ENCODE measurements at regions of chr5 and their contacts with region 1.

Region 1: DNA sequence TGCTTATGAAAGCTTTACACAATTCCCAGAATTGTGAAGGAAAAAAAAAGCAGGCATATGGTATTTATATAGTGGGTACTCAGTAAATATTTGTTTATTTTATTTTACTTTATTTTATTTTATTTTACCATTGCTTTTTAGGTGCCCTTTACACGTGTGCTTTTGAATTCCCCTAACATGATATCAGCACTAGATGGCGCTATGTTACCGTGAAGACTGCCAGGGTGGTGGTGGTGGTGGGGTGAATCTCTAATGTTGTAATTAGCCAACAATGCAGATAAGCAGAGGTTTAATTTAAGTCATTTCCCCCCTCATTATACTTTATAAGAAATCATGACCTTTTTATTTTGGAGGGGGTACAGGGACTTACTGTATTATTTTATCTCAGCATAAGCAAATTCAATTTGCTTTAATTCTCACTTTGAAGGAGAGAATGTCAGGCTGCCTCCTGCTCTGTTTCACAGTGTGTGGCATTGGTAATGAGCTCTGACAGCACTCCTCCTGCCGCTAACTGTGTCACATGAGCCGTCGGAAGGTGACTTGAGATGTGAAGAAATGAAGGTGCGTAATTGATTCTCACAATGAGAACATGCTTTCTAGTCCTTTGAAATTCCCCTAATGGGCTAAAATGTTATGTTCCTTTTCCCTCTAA is 165.6 kb downstream of the YTHDC2 start:
- DNase-seq: peak in 1 of 2 experiments; percentile 56
- H3K4me3 ChIP-seq: no peak overlapping the region
- H3K27ac ChIP-seq: no peak overlapping the region
- H3K4me1 ChIP-seq: peaks cover 2 to 6% (median 3%) of the 10 kb centered on the region in 4 experiments; a peak in 4 of 7 replicates
- H3K27me3 ChIP-seq: no peaks in the 10 kb centered on the region
- CTCF ChIP-seq: peak; percentile 46 to 79 (median 53)
- EP300 ChIP-seq: no peak
- POLR2A ChIP-seq: no peak
- RAD21 ChIP-seq: peak; percentile 96 to 97

Region 2: GRCh38 chr5:113612060-113612496 is 67.0 kb before region 1 on chr5:
- CTCF ChIA-PET with region 1: interaction called, 16 read pairs
- POLR2A ChIA-PET with region 1: no interaction called
- DNase-seq: no peak
- H3K4me3 ChIP-seq: no peak overlapping the region
- H3K27ac ChIP-seq: no peak overlapping the region
- H3K4me1 ChIP-seq: peaks cover 0 to 3% (median 0%) of the 10 kb centered on the region in 4 experiments; a peak in 1 of 7 replicates
- H3K27me3 ChIP-seq: no peaks in the 10 kb centered on the region
- CTCF ChIP-seq: peak in 2 of 3 experiments; percentile 28 to 58; a peak in 2 of 4 replicates
- EP300 ChIP-seq: no peak
- POLR2A ChIP-seq: no peak
- RAD21 ChIP-seq: peak; percentile 73 to 78

Region 3: DNA sequence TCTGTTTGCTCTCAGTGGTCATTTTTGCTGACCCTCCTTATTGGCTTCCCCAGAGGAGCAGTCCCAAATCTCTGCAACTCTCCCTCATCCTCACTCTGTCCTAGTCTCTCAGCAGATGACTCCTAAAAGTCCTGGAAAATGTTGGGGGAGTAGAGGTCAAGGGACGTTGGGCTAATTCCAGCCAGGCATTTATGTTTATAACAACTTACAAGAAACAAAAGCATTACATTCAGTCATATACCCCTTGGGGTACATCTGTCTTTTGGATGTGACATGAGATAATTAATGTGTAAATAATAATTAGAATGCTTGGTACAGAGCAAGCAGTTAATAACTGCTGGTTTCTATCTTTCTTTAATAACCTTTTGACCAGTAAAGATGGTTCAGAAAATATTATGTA is 10.6 kb after region 1 on chr5:
- CTCF ChIA-PET with region 1: interaction called, 22 read pairs
- POLR2A ChIA-PET with region 1: interaction called, 3 read pairs
- DNase-seq: no peak
- H3K4me3 ChIP-seq: no peak overlapping the region
- H3K27ac ChIP-seq: no peak overlapping the region
- H3K4me1 ChIP-seq: peaks cover 3 to 10% (median 6%) of the 10 kb centered on the region in 4 experiments; a peak in 6 of 7 replicates
- H3K27me3 ChIP-seq: no peaks in the 10 kb centered on the region
- CTCF ChIP-seq: no peak
- EP300 ChIP-seq: no peak
- POLR2A ChIP-seq: no peak
- RAD21 ChIP-seq: no peak